AG04449 (cell line): ENCODE measurements at regions of chr11 and their contacts with region 1.

Region 1: DNA sequence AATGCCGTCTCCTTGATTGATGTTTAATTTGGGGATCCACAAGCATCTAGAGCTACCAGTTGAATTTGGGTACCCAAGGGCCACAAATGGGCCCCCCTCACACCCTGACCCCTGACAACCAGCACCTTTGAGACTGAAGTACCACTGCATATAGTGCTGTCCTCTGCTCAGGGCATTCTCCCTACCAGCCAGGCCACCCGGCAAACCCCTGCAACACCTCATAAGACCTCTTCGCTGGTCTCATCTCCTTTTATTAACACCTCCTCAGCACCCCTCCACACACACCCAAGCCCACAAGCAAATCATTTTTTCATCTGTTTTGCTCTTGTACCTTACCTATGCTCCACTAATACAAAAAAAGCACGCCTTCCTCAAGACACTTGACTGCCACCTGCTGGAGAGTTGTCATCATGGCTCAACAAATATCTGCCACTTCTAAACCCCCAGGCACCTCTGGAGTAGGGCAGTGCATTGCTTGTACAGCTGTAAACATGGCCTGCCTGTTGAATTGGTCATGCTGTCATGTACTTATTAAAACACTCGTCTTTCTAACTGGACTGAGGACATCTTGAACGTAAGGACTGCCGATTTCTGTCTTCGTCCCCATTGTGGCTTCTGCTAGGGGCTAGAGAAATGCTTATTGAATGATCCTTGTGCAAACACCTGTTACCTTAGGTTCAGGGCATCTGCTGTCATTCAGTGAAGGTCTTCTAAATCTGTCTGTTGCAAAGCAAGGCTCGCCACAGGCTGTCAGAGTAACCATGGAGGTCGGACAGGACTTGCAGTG is 66.5 kb downstream of the BMAL1 start:
- DNase-seq: no peak
- H3K4me3 ChIP-seq: no peak overlapping the region
- CTCF ChIP-seq: peak; percentile 70

Region 2: GRCh38 chr11:12971961-12972360 is 372.2 kb before region 1 on chr11:
- CTCF ChIA-PET with region 1: no interaction called
- POLR2A ChIA-PET with region 1: no interaction called
- DNase-seq: no peak
- H3K4me3 ChIP-seq: no peak overlapping the region
- CTCF ChIP-seq: no peak

Region 3: GRCh38 chr11:13238879-13239514 is 105.1 kb before region 1 on chr11:
- CTCF ChIA-PET with region 1: interaction called, 18 read pairs
- POLR2A ChIA-PET with region 1: no interaction called
- DNase-seq: no peak
- H3K4me3 ChIP-seq: no peak overlapping the region
- CTCF ChIP-seq: peak; percentile 67

Region 4: GRCh38 chr11:13261591-13262061 is 82.5 kb before region 1 on chr11:
- CTCF ChIA-PET with region 1: interaction called, 18 read pairs
- POLR2A ChIA-PET with region 1: no interaction called
- DNase-seq: peak; percentile 55
- H3K4me3 ChIP-seq: no peak overlapping the region
- CTCF ChIP-seq: no peak

Region 5: DNA sequence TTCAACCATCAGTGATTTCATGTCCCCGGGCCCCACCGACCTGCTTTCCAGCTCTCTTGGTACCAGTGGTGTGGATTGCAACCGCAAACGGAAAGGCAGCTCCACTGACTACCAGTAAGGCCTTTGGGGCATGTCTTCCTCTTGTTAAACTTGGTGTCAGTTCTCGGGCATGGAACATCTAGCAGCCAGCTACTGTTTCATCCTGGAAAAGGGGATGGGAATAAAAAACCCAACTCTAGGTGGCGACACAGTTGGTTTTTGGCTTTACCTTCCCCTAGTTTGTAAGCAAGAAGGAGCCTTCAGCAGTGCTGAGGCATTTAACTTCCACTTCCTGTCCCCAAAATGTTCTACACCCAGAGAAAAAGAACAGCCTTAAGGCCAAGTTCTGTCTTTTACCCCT is 10.2 kb after region 1 on chr11:
- CTCF ChIA-PET with region 1: interaction called, 77 read pairs
- POLR2A ChIA-PET with region 1: no interaction called
- DNase-seq: no peak
- H3K4me3 ChIP-seq: no peak overlapping the region
- CTCF ChIP-seq: peak; percentile 19

Region 6: DNA sequence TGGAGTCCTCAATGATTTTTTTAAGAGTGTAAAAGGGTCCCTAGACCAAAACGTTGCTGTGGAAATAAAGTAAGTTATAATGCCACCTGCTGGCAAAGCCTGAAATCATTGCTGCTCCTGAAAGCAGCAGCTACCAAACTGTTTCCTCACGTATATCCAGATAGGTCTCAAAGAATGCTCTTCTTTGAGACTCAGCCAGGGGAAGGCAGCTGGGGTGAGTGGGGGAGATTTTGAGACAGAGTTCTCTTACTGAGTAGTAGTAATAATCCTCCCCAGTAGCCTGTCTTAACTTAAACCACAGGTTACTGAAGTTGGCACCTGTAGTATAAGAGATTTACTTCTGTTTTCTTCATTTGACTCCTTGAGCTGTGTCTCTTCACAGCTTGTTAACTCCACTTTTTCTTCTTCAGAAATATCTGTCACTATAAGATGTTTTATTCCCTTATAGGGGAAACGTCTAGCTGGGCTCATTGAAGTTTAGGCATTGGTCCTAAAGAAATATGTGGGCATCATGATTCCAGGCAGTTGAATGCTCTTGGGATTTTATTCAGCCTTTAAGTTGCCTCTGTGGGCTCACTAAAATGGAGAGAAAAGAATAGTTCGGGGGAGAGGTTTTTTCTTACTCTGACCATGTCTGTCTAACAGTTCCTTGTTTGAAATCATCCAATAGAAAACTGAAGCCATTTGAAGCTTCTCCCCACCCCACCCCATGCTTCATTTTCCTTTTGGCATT is 41.0 kb after region 1 on chr11:
- CTCF ChIA-PET with region 1: interaction called, 11 read pairs
- POLR2A ChIA-PET with region 1: no interaction called
- DNase-seq: peak; percentile 16
- H3K4me3 ChIP-seq: no peak overlapping the region
- CTCF ChIP-seq: peak; percentile 58